GM10248 (cell line): ENCODE measurements at regions of chr16 and their contacts with region 1.

Region 1: DNA sequence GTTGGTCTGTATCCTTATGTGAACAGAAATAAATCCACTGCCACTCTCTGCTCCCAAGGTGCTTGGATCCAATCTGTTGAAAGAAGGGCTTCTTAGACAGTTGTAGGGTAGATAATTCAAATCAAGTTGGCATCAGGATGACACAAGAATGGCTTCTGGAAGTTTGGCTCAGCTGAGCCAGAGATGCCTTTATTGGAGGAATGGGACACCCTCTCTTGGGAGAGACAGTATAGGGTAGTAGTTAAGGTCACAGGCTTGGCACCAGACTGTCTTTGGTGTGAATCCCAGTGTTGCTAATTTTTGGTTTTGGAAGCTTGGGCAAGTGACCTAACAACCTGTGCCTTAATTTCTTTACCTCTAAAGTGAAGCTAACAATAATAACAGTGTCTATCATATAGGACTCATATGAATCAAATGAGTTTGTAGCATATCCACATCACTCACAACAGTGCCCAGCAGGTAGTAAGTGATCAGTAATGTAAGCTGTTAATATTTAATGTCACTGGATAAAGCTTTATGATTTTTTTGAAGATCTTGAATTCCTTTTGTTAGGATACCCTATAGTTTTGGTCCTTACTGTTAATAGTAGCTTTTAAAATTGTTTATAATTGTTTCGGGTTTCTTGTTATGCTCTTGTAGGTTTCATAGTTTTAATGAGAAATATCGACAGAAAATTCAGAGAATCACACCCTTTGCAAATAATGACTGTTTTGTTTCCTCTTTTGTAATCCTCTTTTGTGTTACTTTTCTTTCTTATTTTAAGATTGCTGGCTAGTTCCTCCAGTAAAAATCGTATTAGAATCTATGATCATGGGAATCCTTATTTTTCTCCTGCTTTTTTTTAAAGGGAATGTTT is 19.1 kb downstream of the ZNRF1 start:
- DNase-seq: no peak
- CTCF ChIP-seq: no peak

Region 2: GRCh38 chr16:74991593-74992403 is 26.1 kb before region 1 on chr16:
- CTCF ChIA-PET with region 1: no interaction called
- POLR2A ChIA-PET with region 1: no interaction called
- DNase-seq: no peak
- CTCF ChIP-seq: no peak

Region 3: GRCh38 chr16:75005499-75006096 is 12.3 kb before region 1 on chr16:
- CTCF ChIA-PET with region 1: interaction called, 12 read pairs
- POLR2A ChIA-PET with region 1: no interaction called
- DNase-seq: no peak
- CTCF ChIP-seq: no peak